ENCODE measurements at regions of chr7 and their contacts with region 1.

Region 1: DNA sequence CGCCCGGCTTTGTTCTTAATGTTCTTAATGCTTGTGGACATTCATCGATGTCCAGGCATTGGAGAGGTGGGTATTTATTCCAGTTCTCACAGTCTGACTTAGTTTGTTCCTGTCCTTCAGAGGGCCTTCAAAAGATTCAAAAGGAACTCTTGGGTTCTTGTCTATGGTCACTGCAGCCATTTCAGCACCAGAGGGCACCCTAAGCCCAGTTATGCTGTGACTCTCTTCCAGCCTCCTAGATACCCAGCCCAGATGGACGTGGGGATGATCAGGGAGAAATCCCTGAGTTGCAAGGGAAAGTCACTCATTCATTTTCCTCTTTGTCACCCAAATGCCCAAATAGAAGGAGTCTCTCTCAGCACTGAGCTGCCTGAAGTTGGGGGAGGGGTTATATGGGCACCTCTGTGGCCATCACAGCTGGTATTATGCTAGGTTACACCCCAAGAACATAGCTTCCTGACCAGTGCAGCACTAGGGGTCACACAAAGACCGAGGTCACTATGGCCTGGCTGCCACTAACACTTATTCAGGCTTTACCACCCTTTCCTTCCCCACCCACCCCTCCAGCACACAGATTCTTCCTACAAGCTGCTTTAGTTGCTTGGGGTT is 26.5 kb upstream of the CCDC126 start:
- DNase-seq: peak; percentile 78 to 82
- H3K4me3 ChIP-seq: no peak overlapping the region
- H3K4me3 Mint-ChIP-seq: no peak overlapping the region
- H3K27ac Mint-ChIP-seq: no peak overlapping the region
- H3K4me1 ChIP-seq: no peaks in the 10 kb centered on the region
- H3K4me1 Mint-ChIP-seq: no peaks in the 10 kb centered on the region
- H3K27me3 ChIP-seq: no peaks in the 10 kb centered on the region
- H3K27me3 Mint-ChIP-seq: peaks cover 3% of the 10 kb centered on the region
- CTCF ChIP-seq: peak; percentile 86 to 94

Region 2: GRCh38 chr7:23462846-23463245 is 107.8 kb before region 1 on chr7:
- CTCF ChIA-PET with region 1: no interaction called
- POLR2A ChIA-PET with region 1: no interaction called
- intact Hi-C with region 1: no loop called
- DNase-seq: peak in 1 of 2 experiments; percentile 35
- H3K4me3 ChIP-seq: no peak overlapping the region
- H3K4me3 Mint-ChIP-seq: peak overlapping the region; percentile 72
- H3K27ac Mint-ChIP-seq: peak overlapping the region; percentile 12
- H3K4me1 ChIP-seq: peaks cover 44% of the 10 kb centered on the region
- H3K4me1 Mint-ChIP-seq: peaks cover 37% of the 10 kb centered on the region
- H3K27me3 ChIP-seq: no peaks in the 10 kb centered on the region
- H3K27me3 Mint-ChIP-seq: no peaks in the 10 kb centered on the region
- CTCF ChIP-seq: no peak

Region 3: DNA sequence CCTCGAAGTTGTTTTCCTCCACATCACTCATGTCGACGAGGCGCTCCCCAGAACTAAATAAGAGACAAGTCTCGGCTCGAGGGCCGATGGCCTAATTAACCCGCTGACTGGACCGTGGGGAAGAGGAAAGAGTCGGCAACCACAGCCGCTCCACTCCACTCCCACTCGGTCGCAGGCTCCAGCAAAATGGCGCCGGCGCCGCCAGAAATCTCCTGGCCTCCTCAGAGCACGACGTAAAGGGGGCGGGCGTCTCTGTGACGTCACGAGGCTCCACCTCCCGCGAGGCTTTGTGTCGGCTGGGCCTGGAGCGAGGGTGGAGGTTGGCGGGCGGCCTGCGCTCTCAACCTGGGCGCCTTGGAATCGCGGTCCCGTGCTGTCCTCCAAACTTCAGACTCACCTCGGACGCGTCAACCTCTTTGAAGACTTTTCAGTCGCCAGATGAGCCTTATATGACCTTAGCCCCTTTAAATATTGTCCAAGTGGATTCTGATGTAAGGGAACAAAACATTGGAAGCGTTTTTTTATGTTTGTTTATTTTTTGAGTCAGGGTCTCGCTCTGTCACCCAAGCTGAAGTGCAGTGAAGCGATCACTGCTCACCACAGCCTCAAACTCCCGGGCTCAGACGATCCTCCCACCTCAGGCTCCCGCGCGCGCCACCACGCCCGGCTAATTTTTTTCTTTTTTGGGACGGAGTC is 38.8 kb before region 1 on chr7 and contains the start of gene TRA2A:
- CTCF ChIA-PET with region 1: no interaction called
- POLR2A ChIA-PET with region 1: no interaction called
- intact Hi-C with region 1: no loop called
- DNase-seq: peak; percentile 97
- H3K4me3 ChIP-seq: peak within 1 kb of the TSS; percentile 99
- H3K4me3 Mint-ChIP-seq: peak within 1 kb of the TSS; percentile 91
- H3K27ac Mint-ChIP-seq: peak within 1 kb of the TSS; percentile 99
- H3K4me1 ChIP-seq: peaks cover 19% of the 10 kb centered on the region
- H3K4me1 Mint-ChIP-seq: peaks cover 16% of the 10 kb centered on the region
- H3K27me3 ChIP-seq: no peaks in the 10 kb centered on the region
- H3K27me3 Mint-ChIP-seq: no peaks in the 10 kb centered on the region
- CTCF ChIP-seq: no peak
- total RNA-seq, gene TRA2A: 123 and 132 TPM in 2 replicates

Region 4: DNA sequence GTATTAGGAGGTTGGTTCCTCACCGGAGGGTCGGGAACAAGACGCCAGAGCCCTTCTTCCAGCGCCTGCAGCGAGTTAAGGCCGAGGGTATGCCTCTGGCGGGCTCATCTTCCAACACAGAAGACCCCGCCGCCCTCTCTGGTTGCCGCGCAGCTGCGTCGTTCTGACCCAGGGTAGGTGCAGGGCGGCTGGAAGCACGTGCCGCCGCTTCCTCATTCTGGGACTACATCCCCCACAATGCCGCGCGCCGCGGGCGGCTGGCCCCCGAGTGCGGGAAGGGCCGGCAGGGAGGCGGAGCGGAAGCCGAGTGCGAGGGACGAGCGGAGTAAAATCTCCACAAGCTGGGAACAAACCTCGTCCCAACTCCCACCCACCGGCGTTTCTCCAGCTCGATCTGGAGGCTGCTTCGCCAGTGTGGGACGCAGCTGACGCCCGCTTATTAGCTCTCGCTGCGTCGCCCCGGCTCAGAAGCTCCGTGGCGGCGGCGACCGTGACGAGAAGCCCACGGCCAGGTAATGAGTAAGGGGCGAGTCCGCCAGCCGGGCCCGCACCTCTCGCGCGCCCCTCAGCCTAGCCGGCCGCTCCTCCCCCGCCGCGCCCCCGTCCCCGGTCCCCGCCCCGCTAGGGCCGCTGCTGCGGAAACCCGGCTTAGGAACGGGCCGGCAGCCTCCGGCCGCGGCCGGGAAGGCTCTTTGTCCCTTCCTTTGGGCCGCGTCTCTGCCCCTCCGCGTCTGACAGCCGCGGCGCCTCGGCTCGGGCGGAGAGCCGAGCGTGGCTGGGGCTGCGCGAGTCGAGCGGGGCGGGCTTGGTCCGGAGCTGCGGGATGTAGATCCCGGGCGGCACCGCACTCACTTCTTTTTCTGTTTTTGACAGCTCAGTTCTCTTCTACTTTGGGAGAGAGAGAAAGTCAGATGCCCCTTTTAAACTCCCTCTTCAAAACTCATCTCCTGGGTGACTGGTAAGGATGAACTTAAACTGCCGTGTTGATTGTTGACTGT is 26.7 kb after region 1 on chr7 and contains the start of gene CCDC126:
- CTCF ChIA-PET with region 1: interaction called, 12 read pairs
- POLR2A ChIA-PET with region 1: no interaction called
- intact Hi-C with region 1: loop called (anchors 1 kb)
- DNase-seq: peak; percentile 95 to 97
- H3K4me3 ChIP-seq: peak within 1 kb of the TSS; percentile 63
- H3K4me3 Mint-ChIP-seq: peak within 1 kb of the TSS; percentile 94
- H3K27ac Mint-ChIP-seq: peak within 1 kb of the TSS; percentile 81
- H3K4me1 ChIP-seq: peaks cover 18% of the 10 kb centered on the region
- H3K4me1 Mint-ChIP-seq: peaks cover 22% of the 10 kb centered on the region
- H3K27me3 ChIP-seq: no peaks in the 10 kb centered on the region
- H3K27me3 Mint-ChIP-seq: peaks cover 2% of the 10 kb centered on the region
- CTCF ChIP-seq: no peak
- total RNA-seq, gene CCDC126: 10.1 and 11.3 TPM in 2 replicates

Region 5: DNA sequence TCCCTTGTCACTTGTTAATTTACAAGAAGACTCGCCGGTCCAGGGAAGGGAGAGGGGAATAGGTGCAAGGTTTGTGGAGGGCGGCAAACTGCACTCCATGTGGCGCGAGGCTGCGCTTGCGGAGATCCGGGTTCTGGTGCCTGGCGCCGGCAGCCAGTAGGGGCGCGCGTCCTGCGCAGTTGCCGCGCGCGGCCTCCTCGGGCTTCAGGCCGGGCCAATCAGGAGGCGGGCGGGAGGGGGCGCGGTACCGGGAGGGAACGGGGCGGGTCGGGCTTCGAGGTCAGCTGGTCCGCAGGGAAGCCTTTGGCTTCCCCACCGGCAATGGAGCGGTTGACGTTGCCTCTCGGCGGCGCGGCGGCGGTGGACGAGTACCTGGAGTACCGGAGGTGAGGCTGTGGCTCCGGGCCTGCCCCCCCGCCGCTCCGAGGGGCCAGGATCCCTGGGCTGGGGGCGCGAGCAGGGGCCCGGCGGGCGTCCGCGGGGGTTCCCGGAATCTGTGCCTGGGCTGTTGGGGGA is 109.3 kb after region 1 on chr7 and contains the start of gene FAM221A:
- CTCF ChIA-PET with region 1: interaction called, 3 read pairs
- POLR2A ChIA-PET with region 1: no interaction called
- intact Hi-C with region 1: loop called (anchors 1 kb)
- DNase-seq: peak; percentile 91 to 93
- H3K4me3 ChIP-seq: peak within 1 kb of the TSS; percentile 66
- H3K4me3 Mint-ChIP-seq: peak within 1 kb of the TSS; percentile 87
- H3K27ac Mint-ChIP-seq: peak within 1 kb of the TSS; percentile 65
- H3K4me1 ChIP-seq: peaks cover 5% of the 10 kb centered on the region
- H3K4me1 Mint-ChIP-seq: no peaks in the 10 kb centered on the region
- H3K27me3 ChIP-seq: no peaks in the 10 kb centered on the region
- H3K27me3 Mint-ChIP-seq: no peaks in the 10 kb centered on the region
- CTCF ChIP-seq: peak; percentile 64 to 80
- total RNA-seq, gene FAM221A: 13.2 and 19.1 TPM in 2 replicates

Region 6: DNA sequence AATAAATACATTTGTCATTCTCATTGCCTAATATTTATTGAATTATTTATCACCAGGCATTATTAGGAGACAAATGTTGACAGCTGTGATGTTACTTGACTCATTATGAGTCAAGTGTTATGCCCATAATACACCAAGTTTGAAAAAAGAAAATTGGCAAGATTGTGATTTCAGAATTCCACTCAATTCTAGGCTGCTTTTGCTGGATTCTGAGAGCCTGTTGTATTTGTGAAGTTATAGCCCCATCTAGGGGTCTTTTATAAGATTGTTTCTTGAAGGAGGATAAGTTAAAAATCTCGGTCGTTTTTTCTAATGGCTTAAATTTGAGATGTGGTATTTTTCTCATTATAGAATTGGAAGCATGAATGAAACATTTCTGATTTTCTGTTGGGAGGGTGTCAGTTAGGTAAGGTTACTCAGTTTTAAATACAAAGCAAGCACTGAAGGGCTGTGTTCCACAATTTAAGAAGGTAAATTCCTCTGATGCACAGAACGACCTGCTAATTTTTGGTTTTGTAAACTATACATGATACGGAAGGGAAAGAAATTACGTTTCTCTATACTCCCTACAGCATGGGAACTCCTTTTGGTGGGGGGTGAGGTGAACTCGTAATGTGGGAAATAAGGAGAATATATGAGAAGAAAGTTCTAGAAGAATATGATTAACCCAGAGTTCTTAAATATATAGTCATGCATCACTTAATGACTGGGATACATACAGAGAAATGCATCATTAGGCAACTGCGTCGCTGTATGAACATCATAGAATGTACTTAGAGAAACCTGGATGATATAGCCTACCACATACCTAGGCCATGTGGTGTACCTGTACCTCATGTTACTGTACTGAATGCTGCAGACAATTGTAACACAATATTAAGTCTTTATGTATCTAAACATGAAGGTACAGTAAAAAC is 141.9 kb after region 1 on chr7:
- CTCF ChIA-PET with region 1: interaction called, 14 read pairs
- POLR2A ChIA-PET with region 1: interaction called, 5 read pairs
- intact Hi-C with region 1: loop called (anchors 1 kb)
- DNase-seq: peak in 1 of 2 experiments; percentile 52
- H3K4me3 ChIP-seq: no peak overlapping the region
- H3K4me3 Mint-ChIP-seq: no peak overlapping the region
- H3K27ac Mint-ChIP-seq: no peak overlapping the region
- H3K4me1 ChIP-seq: peaks cover 9% of the 10 kb centered on the region; the same call in 1 of the 2 replicates
- H3K4me1 Mint-ChIP-seq: peaks cover 14% of the 10 kb centered on the region
- H3K27me3 ChIP-seq: no peaks in the 10 kb centered on the region
- H3K27me3 Mint-ChIP-seq: no peaks in the 10 kb centered on the region
- CTCF ChIP-seq: peak; percentile 53 to 57

Measured in Caco-2 (cell line).